WTC11 (cell line): ENCODE measurements at regions of chr6 and their contacts with region 1.

Region 1: DNA sequence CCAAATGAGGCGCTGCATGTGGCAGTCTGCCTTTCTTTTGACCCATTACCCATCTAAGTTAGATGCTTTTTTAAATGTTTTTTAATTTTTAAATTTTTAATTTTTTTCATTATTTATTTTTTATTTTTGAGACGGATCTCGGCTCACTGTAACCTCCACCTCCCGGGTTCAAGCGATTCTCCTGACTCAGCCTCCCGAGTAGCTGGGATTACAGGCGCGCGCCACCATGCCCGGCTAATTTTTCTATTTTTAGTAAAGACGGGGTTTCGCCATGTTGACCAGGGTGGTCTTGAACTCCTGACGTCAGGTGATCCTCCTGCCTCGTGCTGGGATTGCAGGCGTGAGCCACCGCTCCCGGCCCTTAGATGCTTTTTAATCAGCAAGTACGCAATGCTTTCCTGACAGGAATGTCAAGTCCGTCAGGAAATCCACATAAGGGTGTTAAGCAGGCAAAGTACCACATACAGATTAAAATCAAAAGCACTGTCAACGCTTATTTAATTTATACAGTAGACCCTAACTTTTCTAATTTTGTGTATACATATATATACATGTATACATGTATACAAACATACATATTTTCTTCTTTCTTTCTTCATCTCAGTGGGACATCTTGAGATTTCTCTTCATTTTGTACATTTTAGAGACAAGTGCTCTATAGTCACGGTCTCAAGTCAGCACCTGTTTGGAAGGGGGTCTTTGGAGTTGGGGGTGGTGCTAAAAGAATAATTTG is 995 bp upstream of the GSTA4 start:
- DNase-seq: peak; percentile 42
- ATAC-seq: no peak
- H3K4me3 Mint-ChIP-seq: peak overlapping the region; percentile 89
- H3K27ac Mint-ChIP-seq: peak overlapping the region; percentile 35; the same call in 1 of the 2 replicates
- H3K4me1 Mint-ChIP-seq: peaks cover 15% of the 10 kb centered on the region
- H3K27me3 Mint-ChIP-seq: peaks cover 5% of the 10 kb centered on the region
- CTCF ChIP-seq: no peak

Region 2: GRCh38 chr6:52858416-52858815 is 137.7 kb before region 1 on chr6:
- CTCF ChIA-PET with region 1: interaction called, 10 read pairs
- POLR2A ChIA-PET with region 1: interaction called, 4 read pairs
- DNase-seq: no peak
- ATAC-seq: no peak
- H3K4me3 Mint-ChIP-seq: no peak overlapping the region
- H3K27ac Mint-ChIP-seq: no peak overlapping the region
- H3K4me1 Mint-ChIP-seq: peaks cover 32% of the 10 kb centered on the region
- H3K27me3 Mint-ChIP-seq: 0 out of 2 replicates have a peak, but pooled peaks cover 3% of the 10 kb centered on the region
- CTCF ChIP-seq: no peak

Region 3: GRCh38 chr6:53064726-53065215 is 68.7 kb after region 1 on chr6:
- CTCF ChIA-PET with region 1: interaction called, 10 read pairs
- POLR2A ChIA-PET with region 1: interaction called, 6 read pairs
- DNase-seq: peak; percentile 96
- ATAC-seq: peak; percentile 66
- H3K4me3 Mint-ChIP-seq: peak overlapping the region; percentile 100
- H3K27ac Mint-ChIP-seq: peak overlapping the region; percentile 98
- H3K4me1 Mint-ChIP-seq: peaks cover 29% of the 10 kb centered on the region
- H3K27me3 Mint-ChIP-seq: no peaks in the 10 kb centered on the region
- CTCF ChIP-seq: no peak

Region 4: GRCh38 chr6:53080813-53081212 is 84.7 kb after region 1 on chr6:
- CTCF ChIA-PET with region 1: no interaction called
- POLR2A ChIA-PET with region 1: no interaction called
- DNase-seq: no peak
- ATAC-seq: no peak
- H3K4me3 Mint-ChIP-seq: no peak overlapping the region
- H3K27ac Mint-ChIP-seq: no peak overlapping the region
- H3K4me1 Mint-ChIP-seq: no peaks in the 10 kb centered on the region
- H3K27me3 Mint-ChIP-seq: no peaks in the 10 kb centered on the region
- CTCF ChIP-seq: no peak